Caco-2 (cell line): ENCODE measurements at regions of chr10 and their contacts with region 1.

Region 1: GRCh38 chr10:61232780-61233179 is 220.4 kb downstream of the TMEM26 start:
- DNase-seq: no peak
- H3K4me3 ChIP-seq: no peak overlapping the region
- H3K4me3 Mint-ChIP-seq: no peak overlapping the region
- H3K27ac Mint-ChIP-seq: no peak overlapping the region
- H3K4me1 ChIP-seq: no peaks in the 10 kb centered on the region
- H3K4me1 Mint-ChIP-seq: no peaks in the 10 kb centered on the region
- H3K27me3 ChIP-seq: no peaks in the 10 kb centered on the region
- H3K27me3 Mint-ChIP-seq: peaks cover 3% of the 10 kb centered on the region
- CTCF ChIP-seq: no peak

Region 2: GRCh38 chr10:60910543-60910942 is 322.2 kb before region 1 on chr10:
- CTCF ChIA-PET with region 1: no interaction called
- POLR2A ChIA-PET with region 1: no interaction called
- intact Hi-C with region 1: no loop called
- DNase-seq: no peak
- H3K4me3 ChIP-seq: no peak overlapping the region
- H3K4me3 Mint-ChIP-seq: no peak overlapping the region
- H3K27ac Mint-ChIP-seq: no peak overlapping the region
- H3K4me1 ChIP-seq: no peaks in the 10 kb centered on the region
- H3K4me1 Mint-ChIP-seq: no peaks in the 10 kb centered on the region
- H3K27me3 ChIP-seq: no peaks in the 10 kb centered on the region
- H3K27me3 Mint-ChIP-seq: no peaks in the 10 kb centered on the region
- CTCF ChIP-seq: no peak

Region 3: GRCh38 chr10:61554925-61555324 is 322.1 kb after region 1 on chr10:
- CTCF ChIA-PET with region 1: no interaction called
- POLR2A ChIA-PET with region 1: no interaction called
- intact Hi-C with region 1: loop called (anchors 5 kb)
- DNase-seq: peak in 1 of 2 experiments; percentile 22
- H3K4me3 ChIP-seq: no peak overlapping the region
- H3K4me3 Mint-ChIP-seq: no peak overlapping the region
- H3K27ac Mint-ChIP-seq: no peak overlapping the region
- H3K4me1 ChIP-seq: no peaks in the 10 kb centered on the region
- H3K4me1 Mint-ChIP-seq: no peaks in the 10 kb centered on the region
- H3K27me3 ChIP-seq: no peaks in the 10 kb centered on the region
- H3K27me3 Mint-ChIP-seq: peaks cover 11% of the 10 kb centered on the region
- CTCF ChIP-seq: no peak

Region 4: GRCh38 chr10:61655335-61655851 is 422.6 kb after region 1 on chr10:
- CTCF ChIA-PET with region 1: no interaction called
- POLR2A ChIA-PET with region 1: interaction called, 12 read pairs
- intact Hi-C with region 1: no loop called
- DNase-seq: no peak
- H3K4me3 ChIP-seq: no peak overlapping the region
- H3K4me3 Mint-ChIP-seq: no peak overlapping the region
- H3K27ac Mint-ChIP-seq: no peak overlapping the region
- H3K4me1 ChIP-seq: no peaks in the 10 kb centered on the region
- H3K4me1 Mint-ChIP-seq: peaks cover 7% of the 10 kb centered on the region
- H3K27me3 ChIP-seq: no peaks in the 10 kb centered on the region
- H3K27me3 Mint-ChIP-seq: peaks cover 20% of the 10 kb centered on the region
- CTCF ChIP-seq: no peak